ENCODE measurements at regions of chr12 and their contacts with region 1.

Region 1: GRCh38 chr12:97308576-97309198 is 153.9 kb upstream of the RMST start:
- DNase-seq: peak; percentile 15
- ATAC-seq: peak; percentile 45; the same call in 2 of the 3 replicates
- H3K4me3 ChIP-seq: no peak overlapping the region
- H3K27ac ChIP-seq: no peak overlapping the region
- H3K4me1 ChIP-seq: no peaks in the 10 kb centered on the region
- H3K27me3 ChIP-seq: no peaks in the 10 kb centered on the region
- CTCF ChIP-seq: peak; percentile 52 to 62 (median 57); a peak in 5 of 6 replicates
- EP300 ChIP-seq: no peak
- POLR2A ChIP-seq: no peak
- RAD21 ChIP-seq: peak; percentile 61

Region 2: DNA sequence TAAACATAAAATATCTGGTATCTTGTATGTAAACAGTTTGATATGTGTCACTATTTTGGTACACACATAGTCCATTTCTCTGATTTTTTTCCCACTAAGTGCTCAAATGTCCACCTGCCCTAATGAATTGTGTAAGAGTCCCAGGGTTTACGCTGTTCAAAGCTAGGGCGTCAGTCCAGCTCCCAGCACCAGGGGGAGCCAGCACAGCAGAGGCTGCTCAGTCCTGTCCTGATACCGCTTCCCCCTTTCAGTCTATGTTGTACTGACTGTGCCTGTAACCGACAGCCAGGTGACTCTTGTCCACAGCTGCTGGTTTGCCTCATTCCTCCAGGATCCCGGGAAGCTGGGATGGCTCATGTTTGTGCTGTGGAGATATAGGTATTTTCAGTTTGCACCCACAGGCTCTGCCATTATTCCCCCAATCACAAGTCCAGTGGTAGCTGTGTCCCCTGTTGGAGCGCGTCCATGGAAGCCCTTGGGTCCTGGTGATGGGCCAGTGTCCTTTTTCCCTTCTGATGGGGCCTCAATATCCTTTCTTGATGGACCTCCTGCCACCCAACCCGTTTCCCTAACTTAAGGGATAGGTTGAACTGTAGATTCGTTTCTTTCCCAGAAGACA is 159.6 kb before region 1 on chr12:
- CTCF ChIA-PET with region 1: interaction called, 18 read pairs
- POLR2A ChIA-PET with region 1: no interaction called
- RAD21 ChIA-PET with region 1: interaction called, 11 read pairs
- SMC1A ChIA-PET with region 1: interaction called, 6 read pairs
- in situ Hi-C with region 1: no loop called
- intact Hi-C with region 1: loop called (anchors 1 kb)
- DNase-seq: no peak
- ATAC-seq: peak; percentile 100
- H3K4me3 ChIP-seq: no peak overlapping the region
- H3K27ac ChIP-seq: no peak overlapping the region
- H3K4me1 ChIP-seq: no peaks in the 10 kb centered on the region
- H3K27me3 ChIP-seq: no peaks in the 10 kb centered on the region; a peak in 1 of 4 replicates
- CTCF ChIP-seq: peak; percentile 90 to 96 (median 90)
- EP300 ChIP-seq: no peak
- POLR2A ChIP-seq: no peak
- RAD21 ChIP-seq: peak; percentile 88

Region 3: GRCh38 chr12:97283297-97283696 is 25.4 kb before region 1 on chr12:
- CTCF ChIA-PET with region 1: interaction called, 5 read pairs
- POLR2A ChIA-PET with region 1: no interaction called
- RAD21 ChIA-PET with region 1: interaction called, 3 read pairs
- SMC1A ChIA-PET with region 1: interaction called, 10 read pairs
- in situ Hi-C with region 1: no loop called
- intact Hi-C with region 1: no loop called
- DNase-seq: no peak
- ATAC-seq: no peak
- H3K4me3 ChIP-seq: no peak overlapping the region
- H3K27ac ChIP-seq: no peak overlapping the region
- H3K4me1 ChIP-seq: no peaks in the 10 kb centered on the region
- H3K27me3 ChIP-seq: no peaks in the 10 kb centered on the region; a peak in 1 of 4 replicates
- CTCF ChIP-seq: peak; percentile 21 to 40 (median 35); a peak in 5 of 6 replicates
- EP300 ChIP-seq: no peak
- POLR2A ChIP-seq: no peak
- RAD21 ChIP-seq: peak; percentile 40; the same call in 1 of the 2 replicates

Region 4: DNA sequence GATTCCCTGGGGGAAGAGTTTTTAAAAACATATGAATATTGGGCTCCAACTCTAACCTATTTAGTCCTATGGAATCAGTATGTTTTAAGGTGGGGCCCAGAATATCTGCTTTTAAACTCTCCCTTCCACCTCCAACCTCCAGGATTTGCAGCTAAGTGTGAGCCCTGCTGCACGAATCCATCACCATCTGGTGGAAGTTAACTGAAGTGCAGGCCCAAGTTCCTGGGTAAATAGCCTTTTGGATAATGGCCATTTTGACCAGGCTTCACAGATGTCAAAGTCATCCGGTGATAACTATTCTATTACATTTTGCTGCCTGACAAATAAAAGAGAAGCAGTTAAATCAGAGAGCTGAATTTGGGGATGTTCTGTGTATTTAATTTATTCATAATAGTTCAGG is 95.9 kb after region 1 on chr12:
- CTCF ChIA-PET with region 1: interaction called, 16 read pairs
- POLR2A ChIA-PET with region 1: no interaction called
- RAD21 ChIA-PET with region 1: interaction called, 5 read pairs
- SMC1A ChIA-PET with region 1: interaction called, 12 read pairs
- in situ Hi-C with region 1: no loop called
- intact Hi-C with region 1: no loop called
- DNase-seq: peak; percentile 23
- ATAC-seq: peak; percentile 90
- H3K4me3 ChIP-seq: no peak overlapping the region
- H3K27ac ChIP-seq: no peak overlapping the region
- H3K4me1 ChIP-seq: peaks cover 7% of the 10 kb centered on the region; the same call in 1 of the 2 replicates
- H3K27me3 ChIP-seq: no peaks in the 10 kb centered on the region
- CTCF ChIP-seq: peak; percentile 76 to 84 (median 83)
- EP300 ChIP-seq: no peak
- POLR2A ChIP-seq: no peak
- RAD21 ChIP-seq: peak; percentile 96

Measured in GM12878 (cell line).